ENCODE measurements at regions of chr9 and their contacts with region 1.

Region 1: DNA sequence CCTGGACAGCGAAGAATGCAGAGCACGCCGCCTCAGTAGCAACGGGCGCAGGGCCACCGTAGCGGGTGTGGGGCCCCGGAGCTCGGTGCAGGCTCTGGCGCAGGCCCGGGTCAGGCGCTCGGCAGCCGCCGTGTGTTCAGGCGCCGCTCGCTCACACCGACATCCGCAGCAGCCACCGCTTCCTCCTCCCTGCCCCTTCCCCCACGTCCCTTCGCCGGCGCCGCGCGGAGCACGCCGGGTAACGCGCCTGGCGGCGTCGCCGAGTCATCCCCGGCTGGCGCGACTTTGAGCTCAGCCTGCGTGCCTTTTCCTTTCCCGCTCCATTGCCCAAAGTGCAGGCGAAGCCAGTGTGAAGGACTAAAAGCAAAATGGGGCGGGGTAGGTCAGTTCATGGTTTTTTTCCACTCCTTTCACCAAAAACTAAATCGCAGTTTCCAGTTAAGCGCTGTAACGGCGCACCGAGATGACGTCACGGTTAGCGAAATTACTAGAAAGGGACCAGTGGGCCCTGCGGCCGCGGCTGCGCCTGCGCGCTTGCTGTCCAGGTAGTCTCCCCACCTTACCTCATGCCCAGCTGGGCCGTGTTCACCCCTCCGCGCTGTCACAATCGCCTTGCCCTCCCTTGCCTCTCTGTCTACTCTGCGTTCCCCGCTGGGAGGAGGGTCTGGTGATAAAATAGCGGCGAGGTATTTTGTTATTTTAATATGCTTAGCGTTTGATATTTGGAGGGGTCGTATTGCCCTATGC is at the start of gene UBQLN1:
- DNase-seq: peak; percentile 93
- H3K4me3 ChIP-seq: peak within 1 kb of the TSS; percentile 18 to 100 (median 57)
- H3K27ac ChIP-seq: peak within 1 kb of the TSS; percentile 99
- H3K4me1 ChIP-seq: peaks cover 16% of the 10 kb centered on the region
- H3K27me3 ChIP-seq: no peaks in the 10 kb centered on the region
- CTCF ChIP-seq: no peak
- POLR2A ChIP-seq: peak; percentile 93
- total RNA-seq, gene UBQLN1: 101 and 110 TPM in 2 replicates

Region 2: GRCh38 chr9:83649080-83649479 is 58.9 kb before region 1 on chr9:
- CTCF ChIA-PET with region 1: interaction called, 12 read pairs
- POLR2A ChIA-PET with region 1: interaction called, 3 read pairs
- dilution Hi-C with region 1: no loop called
- intact Hi-C with region 1: no loop called
- DNase-seq: peak; percentile 32
- H3K4me3 ChIP-seq: no peak overlapping the region
- H3K27ac ChIP-seq: no peak overlapping the region
- H3K4me1 ChIP-seq: no peaks in the 10 kb centered on the region
- H3K27me3 ChIP-seq: no peaks in the 10 kb centered on the region
- CTCF ChIP-seq: peak; percentile 70 to 77
- POLR2A ChIP-seq: no peak

Region 3: GRCh38 chr9:83665580-83666200 is 42.3 kb before region 1 on chr9:
- CTCF ChIA-PET with region 1: interaction called, 21 read pairs
- POLR2A ChIA-PET with region 1: interaction called, 11 read pairs
- dilution Hi-C with region 1: no loop called
- intact Hi-C with region 1: loop called (anchors 1 kb)
- DNase-seq: peak; percentile 83
- H3K4me3 ChIP-seq: peak overlapping the region in 1 of 3 experiments; percentile 13
- H3K27ac ChIP-seq: peak overlapping the region; percentile 87
- H3K4me1 ChIP-seq: peaks cover 31% of the 10 kb centered on the region
- H3K27me3 ChIP-seq: no peaks in the 10 kb centered on the region
- CTCF ChIP-seq: no peak
- POLR2A ChIP-seq: no peak

Region 4: GRCh38 chr9:83722686-83723085 is 14.7 kb after region 1 on chr9:
- CTCF ChIA-PET with region 1: no interaction called
- POLR2A ChIA-PET with region 1: no interaction called
- dilution Hi-C with region 1: no loop called
- intact Hi-C with region 1: no loop called
- DNase-seq: no peak
- H3K4me3 ChIP-seq: no peak overlapping the region
- H3K27ac ChIP-seq: no peak overlapping the region
- H3K4me1 ChIP-seq: no peaks in the 10 kb centered on the region
- H3K27me3 ChIP-seq: peaks cover 0 to 10% of the 10 kb centered on the region in 2 experiments
- CTCF ChIP-seq: no peak
- POLR2A ChIP-seq: no peak

Region 5: GRCh38 chr9:83920927-83921707 is 213.2 kb after region 1 on chr9 and contains the start of gene KIF27:
- CTCF ChIA-PET with region 1: no interaction called
- POLR2A ChIA-PET with region 1: no interaction called
- dilution Hi-C with region 1: no loop called
- intact Hi-C with region 1: loop called (anchors 5 kb)
- DNase-seq: peak; percentile 98
- H3K4me3 ChIP-seq: peak within 1 kb of the TSS; percentile 41 to 78 (median 69)
- H3K27ac ChIP-seq: peak within 1 kb of the TSS; percentile 69
- H3K4me1 ChIP-seq: peaks cover 10% of the 10 kb centered on the region
- H3K27me3 ChIP-seq: no peaks in the 10 kb centered on the region
- CTCF ChIP-seq: peak; percentile 8 to 36
- POLR2A ChIP-seq: peak; percentile 93
- total RNA-seq, gene KIF27: 3.2 and 3.5 TPM in 2 replicates

Region 6: DNA sequence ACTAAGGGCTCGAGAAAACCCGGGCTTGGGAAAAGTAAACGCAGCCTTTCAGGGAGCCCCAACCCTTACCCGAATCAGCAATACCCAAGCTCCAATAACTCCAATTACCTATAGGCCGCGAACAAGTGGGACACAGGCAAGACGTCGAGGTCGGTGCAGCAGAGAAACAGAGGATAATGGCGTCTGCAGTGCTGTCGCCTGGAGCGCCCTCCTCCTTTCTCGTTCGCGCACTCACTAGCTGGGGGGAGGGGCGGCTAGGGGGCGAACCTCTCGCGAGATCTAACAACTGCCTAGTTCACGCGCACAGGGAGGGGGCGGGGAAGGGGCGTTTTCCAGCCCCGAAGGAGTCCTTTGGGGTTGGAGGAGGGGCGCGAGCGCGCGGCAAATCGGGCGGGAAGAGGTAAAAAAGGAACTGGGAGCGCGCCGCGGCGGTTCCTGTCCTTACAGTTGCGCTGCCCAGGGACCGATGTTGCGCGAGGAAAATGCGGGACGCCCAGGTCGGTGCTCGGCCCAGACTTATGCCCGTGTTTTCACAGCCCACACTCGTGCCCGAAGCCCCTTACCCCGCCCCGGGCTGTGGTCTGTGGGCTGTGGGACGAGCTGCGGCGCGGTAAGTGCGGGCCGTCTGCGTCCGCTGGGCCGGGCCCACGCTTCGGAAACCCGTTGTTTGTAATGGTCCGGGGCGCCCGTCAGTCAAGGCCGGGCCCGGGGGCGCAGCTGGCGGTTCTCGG is 272.6 kb after region 1 on chr9 and contains the start of gene RMI1:
- CTCF ChIA-PET with region 1: no interaction called
- POLR2A ChIA-PET with region 1: interaction called, 3 read pairs
- dilution Hi-C with region 1: no loop called
- intact Hi-C with region 1: loop called (anchors 5 kb)
- DNase-seq: peak; percentile 97
- H3K4me3 ChIP-seq: peak within 1 kb of the TSS; percentile 67 to 96 (median 90)
- H3K27ac ChIP-seq: peak within 1 kb of the TSS; percentile 95
- H3K4me1 ChIP-seq: peaks cover 13% of the 10 kb centered on the region
- H3K27me3 ChIP-seq: no peaks in the 10 kb centered on the region
- CTCF ChIP-seq: no peak
- POLR2A ChIP-seq: peak; percentile 95
- total RNA-seq, gene RMI1: 11.4 and 11.5 TPM in 2 replicates

Region 7: GRCh38 chr9:84154320-84154719 is 446.4 kb after region 1 on chr9:
- CTCF ChIA-PET with region 1: no interaction called
- POLR2A ChIA-PET with region 1: no interaction called
- dilution Hi-C with region 1: no loop called
- intact Hi-C with region 1: loop called (anchors 5 kb)
- DNase-seq: no peak
- H3K4me3 ChIP-seq: no peak overlapping the region
- H3K27ac ChIP-seq: no peak overlapping the region
- H3K4me1 ChIP-seq: peaks cover 22% of the 10 kb centered on the region
- H3K27me3 ChIP-seq: no peaks in the 10 kb centered on the region
- CTCF ChIP-seq: no peak
- POLR2A ChIP-seq: no peak

Measured in endothelial cell of umbilical vein (primary cell).